Mammary epithelial cell (primary cell): ENCODE measurements at regions of chr1 and their contacts with region 1.

Region 1: GRCh38 chr1:68600049-68600661 is 103.3 kb upstream of the DEPDC1 start:
- DNase-seq: peak; percentile 8
- H3K4me3 ChIP-seq: no peak overlapping the region
- H3K27ac ChIP-seq: no peak overlapping the region
- H3K4me1 ChIP-seq: no peaks in the 10 kb centered on the region
- H3K27me3 ChIP-seq: peaks cover 2% of the 10 kb centered on the region
- CTCF ChIP-seq: peak; percentile 68 to 77

Region 2: GRCh38 chr1:68178821-68179490 is 421.2 kb before region 1 on chr1:
- CTCF ChIA-PET with region 1: no interaction called
- dilution Hi-C with region 1: no loop called
- in situ Hi-C with region 1: no loop called
- intact Hi-C with region 1: no loop called
- DNase-seq: peak; percentile 76
- H3K4me3 ChIP-seq: no peak overlapping the region
- H3K27ac ChIP-seq: peak overlapping the region; percentile 16
- H3K4me1 ChIP-seq: peaks cover 41% of the 10 kb centered on the region
- H3K27me3 ChIP-seq: no peaks in the 10 kb centered on the region
- CTCF ChIP-seq: no peak

Region 3: GRCh38 chr1:69016468-69016867 is 416.3 kb after region 1 on chr1:
- CTCF ChIA-PET with region 1: no interaction called
- dilution Hi-C with region 1: no loop called
- in situ Hi-C with region 1: no loop called
- intact Hi-C with region 1: loop called (anchors 10 kb)
- DNase-seq: no peak
- H3K4me3 ChIP-seq: no peak overlapping the region
- H3K27ac ChIP-seq: no peak overlapping the region
- H3K4me1 ChIP-seq: no peaks in the 10 kb centered on the region
- H3K27me3 ChIP-seq: no peaks in the 10 kb centered on the region
- CTCF ChIP-seq: peak; percentile 18 to 40